Activated naive CD4-positive, alpha-beta T cell treated with anti-CD3 and anti-CD28 coated beads for 36 hours (primary cell): ENCODE measurements at regions of chr19 and their contacts with region 1.

Region 1: DNA sequence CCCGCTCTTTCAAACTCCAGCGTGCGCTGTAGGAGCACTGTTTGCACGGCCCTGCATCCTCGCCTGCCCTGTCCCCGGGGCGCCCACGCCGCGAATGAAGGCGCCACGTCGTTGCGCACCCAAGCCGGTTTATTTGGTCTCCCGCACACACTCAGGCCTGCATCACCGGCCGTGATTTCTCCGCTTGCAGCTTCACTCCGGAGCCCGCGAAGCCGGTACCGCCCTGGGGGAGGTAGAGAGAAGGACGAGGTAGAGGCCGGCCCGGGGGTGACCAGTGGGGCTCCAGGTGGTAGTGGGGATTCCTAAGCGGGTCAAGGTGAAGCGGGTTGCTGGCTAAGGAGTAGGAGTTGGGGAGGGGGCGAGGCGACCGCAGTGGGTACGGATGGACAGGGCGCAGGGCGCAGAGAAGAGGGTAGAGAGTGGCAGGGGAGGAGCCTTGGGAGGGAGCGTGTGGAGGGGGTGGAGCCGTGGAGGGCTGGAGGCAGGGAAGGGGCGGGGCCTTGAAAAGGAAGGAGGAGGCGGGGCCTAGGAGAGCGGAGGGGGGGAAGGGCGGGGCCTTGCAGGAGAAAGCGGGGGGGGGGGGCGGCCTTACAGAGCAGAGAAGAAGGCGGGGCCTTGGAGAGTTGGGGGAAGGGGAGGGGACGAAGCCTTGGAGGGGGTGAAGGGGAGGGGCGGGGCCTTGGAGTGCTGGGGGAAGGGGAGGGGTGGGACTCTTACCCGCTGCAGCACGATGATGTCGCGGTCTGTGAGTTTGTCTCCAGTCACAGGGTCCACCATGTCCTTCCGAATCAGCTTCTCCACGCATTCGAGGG is 24.6 kb downstream of the NOSIP start:
- DNase-seq: peak; percentile 94
- H3K4me3 Mint-ChIP-seq: peak overlapping the region; percentile 51
- H3K27ac Mint-ChIP-seq: peak overlapping the region; percentile 95
- H3K4me1 Mint-ChIP-seq: peaks cover 84% of the 10 kb centered on the region
- H3K27me3 Mint-ChIP-seq: no peaks in the 10 kb centered on the region

Region 2: GRCh38 chr19:49056010-49056901 is 499.6 kb before region 1 on chr19:
- CTCF ChIA-PET with region 1: no interaction called
- intact Hi-C with region 1: no loop called
- DNase-seq: peak; percentile 67
- H3K4me3 Mint-ChIP-seq: peak overlapping the region; percentile 71
- H3K27ac Mint-ChIP-seq: no peak overlapping the region
- H3K4me1 Mint-ChIP-seq: peaks cover 22% of the 10 kb centered on the region
- H3K27me3 Mint-ChIP-seq: peaks cover 39% of the 10 kb centered on the region

Region 3: DNA sequence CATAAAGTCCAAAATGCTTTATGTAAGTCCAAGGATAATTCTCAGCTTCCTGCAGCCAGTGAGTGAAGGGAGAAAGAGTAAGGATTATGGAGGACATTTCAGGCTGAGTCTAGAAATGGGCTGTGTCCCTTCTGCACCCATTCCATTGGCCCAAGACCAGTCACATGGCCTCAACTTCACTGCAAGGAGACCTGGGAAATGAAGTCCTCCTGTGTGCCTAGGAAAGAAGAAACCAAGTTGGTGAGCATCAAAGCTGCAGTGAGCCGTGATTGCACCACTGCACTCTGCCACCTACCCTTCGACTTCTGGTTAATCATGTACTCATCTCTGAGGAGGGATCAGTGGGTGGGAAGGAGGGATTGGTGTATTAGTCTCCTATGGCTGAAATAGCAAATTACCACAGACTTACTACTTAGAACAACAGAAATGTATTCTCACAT is 224.2 kb before region 1 on chr19:
- CTCF ChIA-PET with region 1: no interaction called
- intact Hi-C with region 1: loop called (anchors 10 kb)
- DNase-seq: peak; percentile 84
- H3K4me3 Mint-ChIP-seq: peak overlapping the region; percentile 44
- H3K27ac Mint-ChIP-seq: peak overlapping the region; percentile 81
- H3K4me1 Mint-ChIP-seq: peaks cover 74% of the 10 kb centered on the region
- H3K27me3 Mint-ChIP-seq: no peaks in the 10 kb centered on the region

Region 4: DNA sequence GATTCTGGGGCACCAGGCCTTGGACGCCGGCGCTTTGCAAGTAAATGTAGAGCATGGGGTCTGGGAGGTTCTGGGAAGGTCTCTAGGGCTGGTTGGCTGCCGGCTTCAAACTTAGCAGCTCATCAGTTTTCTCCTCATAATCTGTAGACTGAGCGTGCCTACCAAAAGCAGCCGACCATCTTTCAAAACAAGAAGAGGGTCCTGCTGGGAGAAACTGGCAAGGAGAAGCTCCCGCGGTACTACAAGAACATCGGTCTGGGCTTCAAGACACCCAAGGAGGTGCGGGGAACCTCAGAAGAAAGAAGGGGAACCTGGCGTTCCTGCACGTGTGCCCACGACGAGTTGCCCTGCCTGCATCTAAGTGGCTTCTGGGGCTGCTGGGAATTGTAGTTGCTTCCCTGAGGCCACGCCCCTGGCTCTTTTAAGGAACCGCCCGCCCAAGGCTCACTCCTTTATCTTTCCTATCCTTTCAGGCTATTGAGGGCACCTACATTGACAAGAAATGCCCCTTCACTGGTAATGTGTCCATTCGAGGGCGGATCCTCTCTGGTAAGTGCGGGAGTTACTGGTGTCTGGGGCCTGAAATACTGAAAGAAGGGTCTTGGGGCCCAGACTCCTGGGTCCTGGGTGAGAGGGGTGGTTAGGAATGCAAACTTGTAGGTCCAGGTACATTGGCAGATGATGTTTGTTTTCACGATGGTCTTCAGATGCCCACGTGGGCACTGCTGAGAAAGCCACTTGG is 58.6 kb before region 1 on chr19:
- CTCF ChIA-PET with region 1: interaction called, 60 read pairs
- intact Hi-C with region 1: loop called (anchors 2 kb)
- DNase-seq: peak; percentile 79
- H3K4me3 Mint-ChIP-seq: peak overlapping the region; percentile 87
- H3K27ac Mint-ChIP-seq: peak overlapping the region; percentile 96
- H3K4me1 Mint-ChIP-seq: peaks cover 49% of the 10 kb centered on the region
- H3K27me3 Mint-ChIP-seq: no peaks in the 10 kb centered on the region

Region 5: GRCh38 chr19:49502866-49503581 is 52.8 kb before region 1 on chr19:
- CTCF ChIA-PET with region 1: interaction called, 60 read pairs
- intact Hi-C with region 1: no loop called
- DNase-seq: peak; percentile 63
- H3K4me3 Mint-ChIP-seq: no peak overlapping the region
- H3K27ac Mint-ChIP-seq: no peak overlapping the region
- H3K4me1 Mint-ChIP-seq: peaks cover 47% of the 10 kb centered on the region
- H3K27me3 Mint-ChIP-seq: no peaks in the 10 kb centered on the region

Region 6: GRCh38 chr19:49533551-49534488 is 22.0 kb before region 1 on chr19:
- CTCF ChIA-PET with region 1: interaction called, 9 read pairs
- intact Hi-C with region 1: loop called (anchors 2 kb)
- DNase-seq: peak; percentile 82
- H3K4me3 Mint-ChIP-seq: peak overlapping the region; percentile 83
- H3K27ac Mint-ChIP-seq: no peak overlapping the region
- H3K4me1 Mint-ChIP-seq: peaks cover 21% of the 10 kb centered on the region
- H3K27me3 Mint-ChIP-seq: no peaks in the 10 kb centered on the region

Region 7: DNA sequence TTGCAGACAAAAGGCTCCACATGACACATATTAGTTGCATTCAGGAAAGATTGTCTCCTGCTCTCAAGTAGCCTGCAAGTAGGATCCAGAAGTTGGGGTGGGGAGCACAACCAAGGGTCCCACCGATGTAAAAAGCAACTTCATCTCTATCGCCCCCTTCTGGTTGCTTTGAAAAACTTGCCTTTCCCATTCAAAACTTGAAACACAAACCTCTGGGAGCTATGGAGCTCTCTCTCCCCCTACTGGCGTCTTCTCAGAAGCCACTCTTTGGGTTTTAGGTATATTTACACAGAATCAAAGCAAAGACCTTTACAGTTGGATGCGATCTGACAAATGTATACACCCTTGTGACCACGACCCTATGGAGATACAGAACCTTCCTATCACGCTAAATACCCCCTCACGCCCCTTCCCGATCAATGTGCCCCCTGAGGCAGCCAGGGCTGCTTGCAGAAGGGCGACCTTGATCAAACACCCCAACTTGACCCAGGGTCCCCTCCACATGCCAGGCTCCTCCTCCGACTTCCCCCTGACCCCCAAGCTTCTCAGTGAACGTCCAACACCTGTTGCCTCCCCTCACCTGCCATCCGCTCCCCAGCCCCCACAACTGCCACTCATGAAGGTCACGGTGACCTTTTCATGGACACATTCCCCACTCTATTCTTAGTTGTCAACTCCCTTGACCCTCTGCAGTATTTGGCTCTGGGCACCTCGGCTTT is 14.5 kb after region 1 on chr19:
- CTCF ChIA-PET with region 1: interaction called, 74 read pairs
- intact Hi-C with region 1: loop called (anchors 1 kb)
- DNase-seq: peak; percentile 88
- H3K4me3 Mint-ChIP-seq: no peak overlapping the region
- H3K27ac Mint-ChIP-seq: peak overlapping the region; percentile 0
- H3K4me1 Mint-ChIP-seq: peaks cover 53% of the 10 kb centered on the region
- H3K27me3 Mint-ChIP-seq: no peaks in the 10 kb centered on the region

Region 8: GRCh38 chr19:49590071-49590970 is 34.5 kb after region 1 on chr19:
- CTCF ChIA-PET with region 1: no interaction called
- intact Hi-C with region 1: loop called (anchors 2 kb)
- DNase-seq: peak; percentile 96
- H3K4me3 Mint-ChIP-seq: peak overlapping the region; percentile 77
- H3K27ac Mint-ChIP-seq: peak overlapping the region; percentile 85
- H3K4me1 Mint-ChIP-seq: peaks cover 25% of the 10 kb centered on the region
- H3K27me3 Mint-ChIP-seq: no peaks in the 10 kb centered on the region